Aorta (tissue), 5 donors: ENCODE measurements at regions of chr3 and their contacts with region 1.

Region 1: DNA sequence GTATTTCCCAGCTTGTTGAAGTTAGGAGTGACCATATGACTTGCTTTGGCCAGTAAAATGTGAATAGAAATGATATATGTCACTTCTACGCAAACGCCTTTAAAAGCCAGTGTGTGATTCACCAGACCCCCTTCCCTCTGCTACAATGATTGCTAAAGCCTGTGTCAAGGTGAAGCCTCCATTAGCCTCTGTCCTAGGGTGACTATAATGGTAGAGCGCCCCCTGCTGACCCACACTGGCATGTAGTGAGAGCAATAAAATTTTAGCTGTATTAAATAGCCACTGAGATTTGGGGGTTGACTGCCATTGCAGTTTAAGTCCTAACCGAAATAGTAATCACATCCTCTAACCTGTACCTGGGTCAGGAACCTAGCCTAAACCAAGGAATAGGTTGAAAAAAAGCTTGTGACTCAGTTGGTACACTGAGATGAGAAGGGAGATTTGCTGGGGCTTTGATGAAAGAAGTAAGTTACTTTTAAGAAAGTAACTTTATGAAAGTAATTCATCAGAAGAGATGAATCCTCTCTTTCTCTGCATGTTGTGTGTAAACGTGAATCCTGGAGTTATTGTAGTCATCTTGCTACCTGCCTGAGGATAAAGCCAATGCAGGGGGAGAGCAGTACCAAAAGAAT is 52.6 kb downstream of the GTF2E1 start:
- DNase-seq: peak; percentile 84 to 90
- ATAC-seq: peak; percentile 78
- H3K4me3 ChIP-seq: no peak overlapping the region
- H3K27ac ChIP-seq: no peak overlapping the region
- H3K4me1 ChIP-seq: no peaks in the 10 kb centered on the region
- H3K27me3 ChIP-seq: no peaks in the 10 kb centered on the region

Region 2: DNA sequence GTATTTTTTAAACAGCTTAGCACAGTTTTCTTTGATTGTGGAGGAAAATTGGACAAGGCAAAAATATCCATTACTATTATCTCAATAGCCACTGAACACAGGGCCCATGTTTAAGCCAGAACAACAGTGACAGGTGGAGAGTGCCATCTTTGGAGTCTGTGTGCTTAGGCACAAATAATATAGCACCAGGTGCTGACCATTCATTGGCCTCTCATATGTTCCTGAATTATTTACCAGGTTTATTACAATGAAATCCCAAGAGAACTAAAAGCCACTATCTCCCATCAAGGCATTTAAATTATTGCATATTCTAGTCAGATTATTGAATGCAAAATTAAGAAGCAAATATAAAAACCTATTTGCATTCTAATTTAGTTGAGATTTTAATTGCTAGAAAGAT is 549.7 kb before region 1 on chr3:
- intact Hi-C with region 1: loop called in 1 of 2 experiments (anchors 10 kb)
- DNase-seq: no peak
- ATAC-seq: no peak
- H3K4me3 ChIP-seq: no peak overlapping the region
- H3K27ac ChIP-seq: no peak overlapping the region
- H3K4me1 ChIP-seq: no peaks in the 10 kb centered on the region
- H3K27me3 ChIP-seq: no peaks in the 10 kb centered on the region